ENCODE measurements at regions of chr5 and their contacts with region 1.

Region 1: DNA sequence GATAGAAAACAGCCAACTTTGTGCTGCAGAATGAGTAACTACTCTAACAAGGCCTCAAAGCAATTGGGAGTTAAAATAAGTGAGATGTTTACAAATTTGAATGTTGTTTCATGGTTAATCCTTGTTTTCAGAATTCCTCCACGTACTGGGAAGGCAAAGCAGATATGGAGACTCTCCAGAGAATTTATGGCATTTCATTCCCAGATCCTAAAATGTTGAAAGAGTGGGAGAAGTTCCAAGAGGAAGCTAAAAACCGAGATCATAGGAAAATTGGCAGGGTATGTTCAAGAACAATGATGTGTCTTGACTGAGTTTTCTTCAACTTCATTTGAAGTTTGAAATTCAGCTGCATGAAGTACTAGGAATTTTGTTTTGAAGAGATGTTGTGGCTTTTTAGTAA is 16.4 kb downstream of the TARS1 start:
- DNase-seq: no peak
- CTCF ChIP-seq: no peak

Region 2: GRCh38 chr5:33470544-33470943 is 13.4 kb after region 1 on chr5:
- CTCF ChIA-PET with region 1: interaction called, 19 read pairs
- POLR2A ChIA-PET with region 1: no interaction called
- DNase-seq: no peak
- CTCF ChIP-seq: peak; percentile 43